ENCODE measurements at regions of chrX and their contacts with region 1.

Region 1: DNA sequence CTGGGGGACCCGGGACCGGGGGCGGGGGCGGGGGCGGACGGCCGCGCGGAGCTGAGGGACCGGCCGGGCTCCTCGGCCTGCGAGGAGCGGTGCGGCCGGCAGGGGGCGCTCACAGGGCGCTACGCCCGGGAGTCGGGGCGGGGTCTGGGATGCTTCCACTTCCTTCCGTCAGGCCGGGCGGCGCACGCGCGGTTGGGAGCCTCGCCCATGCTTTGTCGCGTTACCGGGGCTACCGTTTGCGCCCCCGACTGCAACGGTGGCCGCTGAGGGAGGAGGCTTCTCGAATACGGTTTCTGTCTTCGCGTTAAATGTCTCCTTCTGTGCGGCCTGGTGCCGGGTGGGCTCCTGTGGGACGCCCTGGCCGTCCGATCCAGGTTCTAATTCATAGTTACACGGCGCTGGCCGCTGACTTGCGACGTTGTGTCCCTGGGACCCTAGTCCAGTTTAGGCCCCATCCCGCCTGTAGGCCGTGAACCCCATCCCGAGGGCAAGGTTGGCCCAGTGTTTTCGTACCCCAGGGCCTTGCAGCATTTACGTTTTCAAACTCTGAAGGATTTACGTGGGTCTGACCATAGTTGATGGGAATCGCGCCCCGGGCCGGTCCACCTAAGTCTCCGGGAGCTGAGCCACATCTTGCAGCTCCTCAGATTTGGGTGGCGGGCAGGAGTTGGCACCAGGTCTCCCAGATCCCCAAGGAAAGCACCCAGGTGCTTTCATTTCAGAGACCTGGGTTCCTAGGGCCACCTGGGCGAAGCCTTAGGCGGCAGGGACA is 549 bp downstream of the MSL3 start:
- DNase-seq: peak; percentile 85
- ATAC-seq: peak; percentile 54
- H3K4me3 Mint-ChIP-seq: peak overlapping the region; percentile 94
- H3K27ac Mint-ChIP-seq: peak overlapping the region; percentile 53
- H3K4me1 Mint-ChIP-seq: peaks cover 13% of the 10 kb centered on the region
- H3K27me3 Mint-ChIP-seq: peaks cover 23% of the 10 kb centered on the region
- CTCF ChIP-seq: peak; percentile 66

Region 2: DNA sequence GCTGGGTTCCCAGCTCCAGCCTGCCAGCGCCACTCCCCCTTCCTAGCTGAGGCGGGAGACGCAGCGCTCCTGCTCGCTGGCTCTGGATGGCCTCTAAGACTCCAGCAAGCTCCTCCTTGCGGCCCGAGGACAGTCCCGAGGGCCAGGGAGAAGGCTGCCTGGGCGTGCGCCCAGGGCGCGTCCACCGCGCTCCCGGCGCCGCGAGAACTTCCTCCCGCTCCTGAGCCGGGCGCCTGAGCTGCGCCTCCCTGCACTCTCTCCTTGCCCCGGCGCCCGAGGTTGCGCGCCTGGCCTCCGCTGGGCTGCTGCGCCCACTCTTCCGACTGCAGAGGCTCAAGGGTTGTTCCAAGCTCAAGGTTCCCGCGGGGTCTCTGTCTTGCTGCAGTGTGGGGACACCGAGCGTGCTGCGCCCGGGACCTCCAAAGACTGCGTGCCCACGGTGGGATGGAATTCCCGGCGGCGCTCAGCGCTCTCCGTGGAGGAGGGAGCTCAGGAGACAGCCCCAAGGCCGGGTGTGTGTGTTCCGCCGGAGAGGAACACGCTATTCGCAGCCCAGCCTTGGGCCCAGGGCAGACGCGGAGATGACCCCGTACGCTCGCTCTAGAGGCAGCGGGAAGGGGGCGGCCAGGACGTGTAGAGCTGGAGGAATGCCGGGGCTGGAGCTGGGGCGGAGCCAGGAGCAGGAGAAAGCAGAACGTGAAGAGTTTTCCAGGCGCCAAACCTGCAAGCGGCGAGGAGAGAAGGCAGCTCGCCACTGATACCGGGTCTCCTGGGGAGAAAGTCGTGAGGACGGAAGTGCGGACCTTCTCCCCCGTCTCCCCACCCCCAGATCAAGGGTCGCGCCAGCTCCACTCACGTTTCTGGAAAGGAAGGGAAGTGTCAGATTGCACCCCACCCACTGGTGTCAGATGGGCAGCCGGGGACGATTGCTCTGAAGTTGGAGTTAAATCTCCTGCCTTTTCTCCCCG is 93.2 kb before region 1 on chrX and contains the start of gene ARHGAP6:
- CTCF ChIA-PET with region 1: interaction called, 36 read pairs
- POLR2A ChIA-PET with region 1: no interaction called
- DNase-seq: peak; percentile 57
- ATAC-seq: peak; percentile 77
- H3K4me3 Mint-ChIP-seq: peak within 1 kb of the TSS; percentile 75
- H3K27ac Mint-ChIP-seq: no peak within 1 kb of the TSS
- H3K4me1 Mint-ChIP-seq: peaks cover 16% of the 10 kb centered on the region
- H3K27me3 Mint-ChIP-seq: peaks cover 98% of the 10 kb centered on the region
- CTCF ChIP-seq: no peak
- total RNA-seq, gene ARHGAP6: 0.55 to 1.0 TPM (median 0.89 TPM) in 3 replicates

Region 3: DNA sequence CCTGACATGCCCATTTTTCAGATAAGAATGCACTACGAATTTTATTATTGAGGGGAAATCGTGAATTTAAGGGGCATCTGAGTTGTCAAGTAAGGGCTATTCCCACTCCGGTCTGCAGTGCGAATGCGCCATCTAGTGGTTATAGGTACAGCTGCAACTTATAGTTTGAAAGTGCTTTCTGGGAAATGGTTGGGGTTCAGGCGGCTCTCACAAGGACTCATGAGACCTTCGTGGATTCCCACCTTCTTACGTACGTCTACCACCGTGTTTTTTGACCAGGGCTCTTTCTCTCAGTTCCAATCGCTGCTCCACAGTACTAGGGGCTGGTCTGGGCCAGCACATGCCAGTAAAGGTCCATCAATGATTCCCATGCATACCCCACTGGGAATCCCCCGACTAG is 11.7 kb after region 1 on chrX:
- CTCF ChIA-PET with region 1: interaction called, 10 read pairs
- POLR2A ChIA-PET with region 1: no interaction called
- DNase-seq: peak; percentile 17
- ATAC-seq: peak; percentile 78
- H3K4me3 Mint-ChIP-seq: no peak overlapping the region
- H3K27ac Mint-ChIP-seq: no peak overlapping the region
- H3K4me1 Mint-ChIP-seq: no peaks in the 10 kb centered on the region
- H3K27me3 Mint-ChIP-seq: no peaks in the 10 kb centered on the region
- CTCF ChIP-seq: peak; percentile 67

Region 4: GRCh38 chrX:11787564-11787963 is 29.0 kb after region 1 on chrX:
- CTCF ChIA-PET with region 1: interaction called, 12 read pairs
- POLR2A ChIA-PET with region 1: no interaction called
- DNase-seq: peak; percentile 85
- ATAC-seq: peak; percentile 100
- H3K4me3 Mint-ChIP-seq: no peak overlapping the region
- H3K27ac Mint-ChIP-seq: no peak overlapping the region
- H3K4me1 Mint-ChIP-seq: no peaks in the 10 kb centered on the region
- H3K27me3 Mint-ChIP-seq: no peaks in the 10 kb centered on the region
- CTCF ChIP-seq: peak; percentile 32; the same call in 1 of the 2 replicates

Measured in WTC11 (cell line).